Heart left ventricle (tissue), 16 donors: ENCODE measurements at regions of chr9 and their contacts with region 1.

Region 1: GRCh38 chr9:133375724-133376654 is at the starts of genes STKLD1 and SURF4:
- DNase-seq: peak; percentile 95 to 99 (median 97)
- ATAC-seq: peak; percentile 94 to 98 (median 98)
- H3K4me3 ChIP-seq: peak within 1 kb of the TSS; percentile 75 to 100 (median 94)
- H3K27ac ChIP-seq: peak within 1 kb of the TSS; percentile 83 to 98 (median 94)
- H3K4me1 ChIP-seq: peaks cover 3 to 50% (median 39%) of the 10 kb centered on the region in 12 donors
- H3K27me3 ChIP-seq: no peaks in the 10 kb centered on the region
- CTCF ChIP-seq: peak in 2 of 12 donors; percentile 4 to 11
- POLR2A ChIP-seq: peak in 1 of 2 donors; percentile 94
- total RNA-seq, gene STKLD1: 0.40 to 0.91 (median 0.52) TPM in 7 of 9 donors, not detected in the others
- total RNA-seq, gene SURF4: 53.8 to 106 (median 77.8) TPM

Region 2: GRCh38 chr9:133335878-133336811 is 39.8 kb before region 1 on chr9 and contains the start of gene SURF6:
- intact Hi-C with region 1: loop called in 4 of 10 experiments (anchors 1 to 5 kb)
- DNase-seq: peak; percentile 91 to 96 (median 93)
- ATAC-seq: peak; percentile 89 to 97 (median 96)
- H3K4me3 ChIP-seq: peak within 1 kb of the TSS; percentile 68 to 100 (median 82)
- H3K27ac ChIP-seq: peak within 1 kb of the TSS in 11 of 12 donors; percentile 64 to 91 (median 81)
- H3K4me1 ChIP-seq: peaks cover 6 to 45% (median 20%) of the 10 kb centered on the region in 12 donors
- H3K27me3 ChIP-seq: no peaks in the 10 kb centered on the region
- CTCF ChIP-seq: no peak
- POLR2A ChIP-seq: peak in 1 of 2 donors; percentile 76
- total RNA-seq, gene SURF6: 9.2 to 16.0 (median 11.1) TPM

Region 3: GRCh38 chr9:133347985-133348717 is 27.8 kb before region 1 on chr9 and contains the starts of genes MED22 and RPL7A:
- intact Hi-C with region 1: loop called in 1 of 10 experiments (anchors 2 kb)
- DNase-seq: peak; percentile 94 to 95 (median 95)
- ATAC-seq: peak; percentile 81 to 93 (median 90)
- H3K4me3 ChIP-seq: peak within 1 kb of the TSS; percentile 78 to 100 (median 94)
- H3K27ac ChIP-seq: peak within 1 kb of the TSS; percentile 69 to 99 (median 89)
- H3K4me1 ChIP-seq: peaks cover 4 to 31% (median 25%) of the 10 kb centered on the region in 12 donors
- H3K27me3 ChIP-seq: no peaks in the 10 kb centered on the region
- CTCF ChIP-seq: peak in 1 of 12 donors; percentile 3
- POLR2A ChIP-seq: peak in 1 of 2 donors; percentile 91
- total RNA-seq, gene MED22: 15.5 to 33.8 (median 19.5) TPM
- total RNA-seq, gene RPL7A: 845 to 1,270 (median 964) TPM

Region 4: DNA sequence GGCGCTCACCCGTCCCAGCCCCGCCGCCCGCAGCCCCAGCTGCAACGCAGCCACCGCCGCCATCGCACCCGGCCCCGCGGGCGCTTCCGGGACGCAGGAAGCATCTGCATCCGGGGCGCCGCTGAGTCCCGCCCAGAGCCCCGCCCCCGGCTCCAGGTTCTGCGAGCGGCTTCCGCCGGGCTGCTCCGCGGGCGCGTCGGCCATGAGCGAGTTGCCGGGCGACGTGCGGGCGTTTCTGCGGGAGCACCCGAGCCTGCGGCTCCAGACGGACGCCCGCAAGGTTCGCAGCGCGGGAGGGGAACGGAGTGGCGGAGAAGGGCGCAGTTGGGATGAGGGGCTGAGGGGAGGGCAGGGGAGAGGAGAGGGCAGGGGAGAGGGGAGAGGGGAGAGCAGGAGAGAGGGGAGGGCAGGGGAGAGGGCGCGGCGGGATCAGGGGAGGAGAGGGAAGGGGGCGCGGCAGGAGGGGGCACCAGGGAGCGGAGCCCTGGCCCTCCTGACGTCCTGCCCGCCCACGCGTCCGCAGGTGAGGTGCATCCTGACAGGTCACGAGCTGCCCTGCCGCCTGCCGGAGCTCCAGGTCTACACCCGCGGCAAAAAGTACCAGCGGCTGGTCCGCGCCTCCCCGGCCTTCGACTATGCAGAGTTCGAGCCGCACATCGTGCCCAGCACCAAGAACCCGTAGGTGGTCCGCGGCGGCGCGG is 19.4 kb before region 1 on chr9 and contains the starts of genes SURF1 and SURF2:
- intact Hi-C with region 1: loop called in 1 of 10 experiments (anchors 2 kb)
- DNase-seq: peak; percentile 88 to 94 (median 91)
- ATAC-seq: peak; percentile 63 to 94 (median 90)
- H3K4me3 ChIP-seq: peak within 1 kb of the TSS; percentile 58 to 97 (median 86)
- H3K27ac ChIP-seq: peak within 1 kb of the TSS in 11 of 12 donors; percentile 65 to 89 (median 78)
- H3K4me1 ChIP-seq: peaks cover 3 to 50% (median 26%) of the 10 kb centered on the region in 12 donors
- H3K27me3 ChIP-seq: no peaks in the 10 kb centered on the region
- CTCF ChIP-seq: no peak
- POLR2A ChIP-seq: peak; percentile 13 to 87
- total RNA-seq, gene SURF1: 36.8 to 58.1 (median 50.9) TPM
- total RNA-seq, gene SURF2: 10.0 to 24.8 (median 13.6) TPM

Region 5: DNA sequence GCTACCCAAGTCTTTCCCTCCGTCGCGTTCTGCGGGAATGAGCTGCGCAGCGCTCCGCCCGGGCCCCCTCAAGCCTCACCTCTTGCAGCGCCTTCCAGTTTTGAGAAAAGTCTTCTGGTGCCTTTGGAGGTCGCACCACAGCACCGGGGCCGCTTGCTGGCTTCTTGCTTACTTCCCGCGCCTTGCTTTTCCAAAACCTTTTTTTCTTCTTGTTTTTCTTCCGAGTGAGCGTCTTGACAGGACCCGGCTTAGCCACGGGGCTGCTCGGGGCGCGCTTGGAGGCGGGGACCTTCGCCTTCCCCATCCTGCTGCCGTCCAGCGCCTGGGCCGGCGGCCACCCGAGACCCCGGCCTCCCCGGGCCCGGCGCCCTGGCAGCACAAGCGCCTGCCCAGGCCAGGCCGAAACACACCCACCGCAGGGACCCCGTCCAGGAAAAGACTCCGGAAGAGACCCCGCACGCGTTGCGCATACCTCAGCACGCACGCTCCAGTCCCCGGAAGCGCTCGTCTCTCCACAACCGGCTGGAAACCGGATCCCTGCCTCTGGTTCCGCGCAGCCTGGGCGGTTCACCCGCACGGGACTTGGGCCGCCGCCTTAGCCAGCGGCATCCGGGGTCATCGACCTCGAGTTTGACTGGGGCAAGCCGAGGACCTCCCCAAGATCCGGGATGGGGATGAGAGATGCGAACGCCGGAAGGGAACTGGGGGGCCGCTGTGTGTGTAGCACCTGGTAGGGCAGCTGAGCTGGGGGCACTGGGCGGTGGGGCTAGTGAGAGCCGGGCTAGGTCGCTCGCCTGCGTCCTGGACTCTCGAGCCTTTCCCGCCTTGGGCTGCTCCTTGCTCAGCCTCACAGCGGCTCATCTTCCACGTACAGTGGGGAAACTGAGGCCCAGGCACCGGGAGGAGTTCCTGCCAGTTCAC is 41.8 kb after region 1 on chr9 and contains the start of gene REXO4:
- intact Hi-C with region 1: loop called in 1 of 10 experiments (anchors 5 kb)
- DNase-seq: peak; percentile 83 to 90 (median 86)
- ATAC-seq: peak; percentile 88 to 98 (median 96)
- H3K4me3 ChIP-seq: peak within 1 kb of the TSS; percentile 68 to 97 (median 84)
- H3K27ac ChIP-seq: peak within 1 kb of the TSS; percentile 29 to 92 (median 84)
- H3K4me1 ChIP-seq: peaks cover 6 to 31% (median 19%) of the 10 kb centered on the region in 12 donors
- H3K27me3 ChIP-seq: no peaks in the 10 kb centered on the region
- CTCF ChIP-seq: peak in 1 of 12 donors; percentile 10
- POLR2A ChIP-seq: peak in 1 of 2 donors; percentile 52
- total RNA-seq, gene REXO4: 9.6 to 21.5 (median 13.7) TPM

Region 6: GRCh38 chr9:133459476-133460404 is 83.8 kb after region 1 on chr9 and contains the start of gene CACFD1:
- intact Hi-C with region 1: loop called in 1 of 10 experiments (anchors 2 kb)
- DNase-seq: peak; percentile 95 to 97 (median 97)
- ATAC-seq: peak; percentile 93 to 96 (median 94)
- H3K4me3 ChIP-seq: peak within 1 kb of the TSS; percentile 56 to 97 (median 84)
- H3K27ac ChIP-seq: peak within 1 kb of the TSS; percentile 81 to 98 (median 92)
- H3K4me1 ChIP-seq: peaks cover 0 to 21% (median 13%) of the 10 kb centered on the region in 12 donors
- H3K27me3 ChIP-seq: no peaks in the 10 kb centered on the region
- CTCF ChIP-seq: no peak
- POLR2A ChIP-seq: peak in 1 of 2 donors; percentile 76
- total RNA-seq, gene CACFD1: 8.0 to 15.3 (median 11.6) TPM

Region 7: GRCh38 chr9:133584559-133585476 is 208.8 kb after region 1 on chr9:
- intact Hi-C with region 1: no loop called
- DNase-seq: peak in 1 of 5 donors; percentile 56
- ATAC-seq: peak in 1 of 4 donors; percentile 5
- H3K4me3 ChIP-seq: no peak overlapping the region
- H3K27ac ChIP-seq: peak overlapping the region in 1 of 12 donors; percentile 54
- H3K4me1 ChIP-seq: peaks cover 4 to 45% (median 27%) of the 10 kb centered on the region in 12 donors
- H3K27me3 ChIP-seq: peaks cover 9 to 36% (median 20%) of the 10 kb centered on the region in 9 donors
- CTCF ChIP-seq: no peak
- POLR2A ChIP-seq: no peak